ENCODE measurements at regions of chr19 and their contacts with region 1.

Region 1: DNA sequence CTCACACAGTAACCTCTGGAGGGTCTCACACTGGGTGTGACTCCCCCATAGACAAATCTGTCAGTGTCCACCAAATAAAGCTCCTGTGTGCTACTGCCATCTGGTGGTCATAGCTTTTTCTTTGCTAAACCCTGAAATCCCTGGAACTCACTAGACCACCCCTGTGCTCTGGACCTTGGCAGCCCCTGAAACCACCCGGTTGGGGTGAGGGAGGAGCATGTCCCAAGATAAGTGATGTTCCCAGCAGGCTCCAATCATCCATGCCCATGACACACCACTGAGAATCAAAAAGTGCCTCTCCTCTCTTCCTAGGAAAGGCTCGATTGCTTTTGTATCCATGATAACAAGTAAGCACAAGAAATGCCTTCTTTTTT is 6.5 kb upstream of the HSD17B14 start:
- DNase-seq: no peak
- ATAC-seq: peak; percentile 75 to 78
- H3K4me3 ChIP-seq: no peak overlapping the region
- H3K27ac ChIP-seq: no peak overlapping the region
- H3K4me1 ChIP-seq: no peaks in the 10 kb centered on the region
- H3K27me3 ChIP-seq: no peaks in the 10 kb centered on the region
- CTCF ChIP-seq: peak; percentile 81

Region 2: GRCh38 chr19:48724796-48725753 is 117.7 kb before region 1 on chr19:
- intact Hi-C with region 1: no loop called
- DNase-seq: no peak
- ATAC-seq: peak; percentile 10 to 11
- H3K4me3 ChIP-seq: no peak overlapping the region
- H3K27ac ChIP-seq: peak overlapping the region; percentile 82
- H3K4me1 ChIP-seq: peaks cover 51% of the 10 kb centered on the region
- H3K27me3 ChIP-seq: no peaks in the 10 kb centered on the region
- CTCF ChIP-seq: no peak

Region 3: DNA sequence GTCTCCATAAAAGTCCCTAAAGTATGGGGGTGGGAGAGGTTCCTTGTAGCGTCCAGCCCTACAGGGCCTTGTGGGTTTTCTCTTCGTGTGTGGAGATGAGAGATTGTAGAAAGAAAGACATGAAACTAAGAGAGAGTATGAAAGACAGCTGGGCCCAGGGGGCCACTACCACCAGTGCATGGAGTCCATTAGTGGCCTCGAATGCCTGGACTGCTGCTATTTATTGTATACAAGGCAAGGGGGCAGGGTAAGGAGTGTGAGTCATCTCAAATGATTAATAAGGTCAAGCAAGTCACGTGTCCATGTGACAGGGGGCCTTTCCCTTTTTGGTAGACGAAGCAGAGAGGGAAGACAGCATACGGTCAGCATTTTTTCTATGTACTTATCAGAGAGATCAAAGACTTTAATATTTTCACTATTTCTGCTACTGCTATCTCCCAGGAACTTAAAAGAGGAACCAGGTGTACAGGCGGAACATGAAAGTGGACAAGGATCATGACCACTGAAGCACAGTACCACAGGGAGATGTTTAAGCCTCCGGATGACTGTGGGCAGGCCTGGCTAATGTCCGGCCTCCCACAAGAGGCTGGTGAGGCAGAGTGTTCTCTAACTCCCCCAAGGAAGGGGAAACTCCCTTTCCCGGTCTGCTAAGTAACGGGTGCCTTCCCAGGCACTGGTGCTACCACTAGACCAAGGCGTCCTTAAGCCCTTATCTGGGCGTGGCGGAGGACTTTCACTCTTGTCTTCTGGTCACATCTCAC is 62.0 kb before region 1 on chr19:
- intact Hi-C with region 1: loop called (anchors 5 kb)
- DNase-seq: no peak
- ATAC-seq: peak in 1 of 2 donors; percentile 10
- H3K4me3 ChIP-seq: no peak overlapping the region
- H3K27ac ChIP-seq: peak overlapping the region; percentile 67
- H3K4me1 ChIP-seq: peaks cover 20% of the 10 kb centered on the region
- H3K27me3 ChIP-seq: no peaks in the 10 kb centered on the region
- CTCF ChIP-seq: no peak

Region 4: DNA sequence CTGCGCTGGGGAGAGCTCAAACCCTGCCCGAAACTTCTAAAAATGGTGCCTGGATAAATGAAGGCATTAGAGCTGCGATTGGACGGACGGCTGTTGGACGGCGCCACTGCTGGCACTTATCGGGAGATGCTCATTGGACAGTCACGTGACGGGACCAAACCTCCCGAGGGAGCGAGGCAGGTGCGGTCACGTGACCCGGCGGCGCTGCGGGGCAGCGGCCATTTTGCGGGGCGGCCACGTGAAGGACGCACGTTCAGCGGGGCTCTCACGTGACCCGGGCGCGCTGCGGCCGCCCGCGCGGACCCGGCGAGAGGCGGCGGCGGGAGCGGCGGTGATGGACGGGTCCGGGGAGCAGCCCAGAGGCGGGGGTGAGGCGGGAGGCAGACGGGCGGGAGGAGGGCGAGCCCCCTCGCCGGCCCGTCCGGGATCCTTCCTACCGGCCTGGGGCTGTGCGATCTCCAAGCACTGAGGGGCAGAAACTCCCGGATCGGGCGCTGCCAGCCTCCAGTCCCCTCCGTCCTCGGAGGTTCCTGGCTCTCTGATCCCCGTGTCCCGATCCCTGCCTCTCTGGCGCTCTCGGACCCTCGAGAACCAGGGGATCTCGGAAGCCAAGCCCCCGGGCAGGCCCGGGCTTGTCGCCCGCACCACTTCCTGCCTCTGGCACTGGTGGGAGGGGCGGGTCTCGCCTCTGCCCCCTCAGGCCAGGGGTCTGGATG is 112.0 kb after region 1 on chr19 and contains the start of gene BAX:
- intact Hi-C with region 1: no loop called
- DNase-seq: peak; percentile 98
- ATAC-seq: peak; percentile 95 to 97
- H3K4me3 ChIP-seq: peak within 1 kb of the TSS; percentile 100
- H3K27ac ChIP-seq: peak within 1 kb of the TSS; percentile 92
- H3K4me1 ChIP-seq: peaks cover 18% of the 10 kb centered on the region
- H3K27me3 ChIP-seq: no peaks in the 10 kb centered on the region
- CTCF ChIP-seq: no peak
- total RNA-seq, gene BAX: 142 TPM